Panc1 (cell line): ENCODE measurements at regions of chr18 and their contacts with region 1.

Region 1: DNA sequence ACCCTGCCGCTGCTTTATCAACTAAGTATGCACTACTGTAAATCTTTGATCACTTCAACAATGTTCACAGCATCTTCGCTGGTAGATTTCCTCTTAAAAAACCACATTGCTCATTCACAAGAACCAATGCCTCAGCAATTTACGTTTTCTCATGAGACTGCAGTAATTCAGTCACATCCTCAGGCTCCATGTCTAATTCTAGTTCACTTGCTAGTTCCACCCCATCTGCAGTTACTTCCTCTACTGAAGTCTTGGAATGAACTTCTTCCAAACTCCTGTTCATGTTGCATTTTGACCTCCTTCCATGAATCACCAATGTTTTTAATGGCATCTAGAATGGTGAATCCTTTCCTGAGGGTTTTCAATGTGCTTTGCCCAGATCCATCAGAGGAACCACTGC is 35.8 kb downstream of the PRELID3A start:
- DNase-seq: no peak
- ATAC-seq: no peak
- H3K4me3 ChIP-seq: no peak overlapping the region
- H3K27ac ChIP-seq: no peak overlapping the region
- H3K4me1 ChIP-seq: no peaks in the 10 kb centered on the region
- H3K27me3 ChIP-seq: no peaks in the 10 kb centered on the region
- CTCF ChIP-seq: no peak

Region 2: DNA sequence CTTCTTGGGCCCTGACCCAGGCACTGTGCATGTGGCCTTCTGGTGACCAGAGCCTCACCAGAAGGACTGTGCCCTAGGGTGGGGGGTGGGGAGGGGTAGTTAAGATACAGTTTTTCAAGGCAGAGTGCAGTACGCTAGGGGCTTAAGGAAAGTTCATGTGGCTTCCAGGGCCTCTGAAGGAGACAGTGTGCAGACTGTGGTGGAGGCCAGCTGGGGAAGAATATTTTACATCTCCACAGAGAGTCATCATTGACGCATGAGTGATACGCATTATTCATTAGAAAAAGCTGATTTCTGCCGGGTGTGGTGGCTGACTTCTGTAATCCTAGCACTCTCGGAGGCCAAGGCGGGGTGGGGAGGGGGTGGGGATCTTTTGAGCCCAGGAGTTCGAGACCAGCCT is 466.7 kb before region 1 on chr18:
- CTCF ChIA-PET with region 1: no interaction called
- POLR2A ChIA-PET with region 1: no interaction called
- in situ Hi-C with region 1: no loop called
- intact Hi-C with region 1: no loop called
- DNase-seq: no peak
- ATAC-seq: no peak
- H3K4me3 ChIP-seq: no peak overlapping the region
- H3K27ac ChIP-seq: no peak overlapping the region
- H3K4me1 ChIP-seq: peaks cover 5% of the 10 kb centered on the region; the same call in 1 of the 2 replicates
- H3K27me3 ChIP-seq: no peaks in the 10 kb centered on the region
- CTCF ChIP-seq: no peak

Region 3: GRCh38 chr18:12543697-12544096 is 100.1 kb after region 1 on chr18:
- CTCF ChIA-PET with region 1: interaction called, 10 read pairs
- POLR2A ChIA-PET with region 1: no interaction called
- in situ Hi-C with region 1: no loop called
- intact Hi-C with region 1: no loop called
- DNase-seq: no peak
- ATAC-seq: no peak
- H3K4me3 ChIP-seq: no peak overlapping the region
- H3K27ac ChIP-seq: no peak overlapping the region
- H3K4me1 ChIP-seq: no peaks in the 10 kb centered on the region
- H3K27me3 ChIP-seq: no peaks in the 10 kb centered on the region
- CTCF ChIP-seq: no peak